Transverse colon (tissue), 4 donors: ENCODE measurements at regions of chr1 and their contacts with region 1.

Region 1: GRCh38 chr1:234065794-234066447 is 161.4 kb downstream of the SLC35F3 start:
- DNase-seq: peak; percentile 67
- H3K4me3 ChIP-seq: no peak overlapping the region
- H3K27ac ChIP-seq: no peak overlapping the region
- H3K4me1 ChIP-seq: no peaks in the 10 kb centered on the region
- H3K27me3 ChIP-seq: peaks cover 3% of the 10 kb centered on the region
- CTCF ChIP-seq: peak; percentile 58 to 76 (median 67)
- EP300 ChIP-seq: no peak
- POLR2A ChIP-seq: no peak

Region 2: GRCh38 chr1:233304489-233305102 is 761.3 kb before region 1 on chr1:
- in situ Hi-C with region 1: loop called in 2 of 4 experiments (anchors 10 kb)
- intact Hi-C with region 1: no loop called
- DNase-seq: no peak
- H3K4me3 ChIP-seq: no peak overlapping the region
- H3K27ac ChIP-seq: no peak overlapping the region
- H3K4me1 ChIP-seq: no peaks in the 10 kb centered on the region
- H3K27me3 ChIP-seq: peaks cover 7% of the 10 kb centered on the region
- CTCF ChIP-seq: peak; percentile 68 to 77 (median 73)
- EP300 ChIP-seq: no peak
- POLR2A ChIP-seq: no peak

Region 3: GRCh38 chr1:233394860-233395717 is 670.8 kb before region 1 on chr1:
- in situ Hi-C with region 1: loop called in 2 of 4 experiments (anchors 5 to 25 kb)
- intact Hi-C with region 1: no loop called
- DNase-seq: no peak
- H3K4me3 ChIP-seq: no peak overlapping the region
- H3K27ac ChIP-seq: no peak overlapping the region
- H3K4me1 ChIP-seq: no peaks in the 10 kb centered on the region
- H3K27me3 ChIP-seq: peaks cover 13% of the 10 kb centered on the region
- CTCF ChIP-seq: peak; percentile 41 to 66 (median 59)
- EP300 ChIP-seq: no peak
- POLR2A ChIP-seq: no peak

Region 4: GRCh38 chr1:233440951-233441401 is 624.9 kb before region 1 on chr1:
- in situ Hi-C with region 1: loop called in 1 of 4 experiments (anchors 25 kb)
- intact Hi-C with region 1: no loop called
- DNase-seq: no peak
- H3K4me3 ChIP-seq: no peak overlapping the region
- H3K27ac ChIP-seq: no peak overlapping the region
- H3K4me1 ChIP-seq: no peaks in the 10 kb centered on the region
- H3K27me3 ChIP-seq: peaks cover 12% of the 10 kb centered on the region
- CTCF ChIP-seq: peak; percentile 39 to 59 (median 53)
- EP300 ChIP-seq: no peak
- POLR2A ChIP-seq: no peak